CD4-positive, alpha-beta memory T cell (primary cell): ENCODE measurements at regions of chr11 and their contacts with region 1.

Region 1: GRCh38 chr11:85826116-85826855 is 15.3 kb upstream of the SYTL2 start:
- DNase-seq: peak in 2 of 5 donors; percentile 18 to 29
- H3K4me3 ChIP-seq: no peak overlapping the region
- H3K4me3 Mint-ChIP-seq: peak overlapping the region in 7 of 8 donors; percentile 4 to 76 (median 18)
- H3K27ac ChIP-seq: peak overlapping the region; percentile 6
- H3K27ac Mint-ChIP-seq: peak overlapping the region; percentile 82 to 99 (median 97)
- H3K4me1 ChIP-seq: peaks cover 74% of the 10 kb centered on the region
- H3K4me1 Mint-ChIP-seq: peaks cover 58 to 77% (median 63%) of the 10 kb centered on the region in 4 donors
- H3K27me3 ChIP-seq: no peaks in the 10 kb centered on the region
- H3K27me3 Mint-ChIP-seq: no peaks in the 10 kb centered on the region

Region 2: DNA sequence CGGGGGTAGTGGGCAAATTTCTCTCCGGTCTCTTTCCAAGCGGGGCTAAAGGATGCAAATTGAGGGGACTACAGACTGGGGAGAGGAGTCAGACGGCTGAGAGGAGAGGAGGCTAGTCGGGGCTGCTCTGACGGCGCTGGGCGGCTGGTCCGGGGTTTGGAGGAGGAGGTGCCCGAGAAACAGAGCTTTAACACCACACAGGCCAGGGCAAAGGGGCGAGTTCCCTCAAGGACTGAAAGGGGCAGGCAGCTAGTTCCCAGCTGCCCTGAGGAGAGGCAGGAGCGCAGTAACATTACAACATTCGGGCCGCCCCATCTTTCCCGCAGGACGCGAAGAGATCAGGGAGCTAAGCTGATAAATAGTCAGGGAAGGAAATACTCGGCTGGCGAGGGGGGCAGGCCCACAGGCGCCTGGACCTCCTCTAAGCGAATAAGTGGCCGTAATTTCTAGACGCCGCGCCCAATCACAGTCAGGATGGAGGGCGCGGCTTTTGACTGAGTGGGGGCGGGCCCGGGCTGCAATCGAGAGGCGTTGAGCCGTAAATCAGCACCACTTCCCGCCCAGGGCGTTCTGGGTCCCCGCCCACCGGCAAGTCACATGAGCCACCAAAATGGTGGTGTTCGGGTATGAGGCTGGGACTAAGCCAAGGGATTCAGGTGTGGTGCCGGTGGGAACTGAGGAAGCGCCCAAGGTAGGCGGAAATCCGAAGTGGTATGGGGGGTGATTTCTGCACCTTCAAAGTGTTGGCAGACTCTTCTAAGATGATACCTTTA is 198.1 kb before region 1 on chr11 and contains the start of gene TMEM126B:
- CTCF ChIA-PET with region 1: no interaction called
- POLR2A ChIA-PET with region 1: interaction called, 16 read pairs
- intact Hi-C with region 1: loop called (anchors 2 kb)
- DNase-seq: peak; percentile 92 to 97 (median 94)
- H3K4me3 ChIP-seq: peak within 1 kb of the TSS; percentile 58 to 73
- H3K4me3 Mint-ChIP-seq: peak within 1 kb of the TSS; percentile 93 to 99 (median 98)
- H3K27ac ChIP-seq: peak within 1 kb of the TSS; percentile 82
- H3K27ac Mint-ChIP-seq: peak within 1 kb of the TSS; percentile 91 to 99 (median 97)
- H3K4me1 ChIP-seq: peaks cover 30% of the 10 kb centered on the region
- H3K4me1 Mint-ChIP-seq: peaks cover 27 to 47% (median 36%) of the 10 kb centered on the region in 4 donors
- H3K27me3 ChIP-seq: no peaks in the 10 kb centered on the region
- H3K27me3 Mint-ChIP-seq: peaks cover 0 to 2% of the 10 kb centered on the region in 2 donors
- total RNA-seq, gene TMEM126B: 40.9 to 46.8 TPM

Region 3: DNA sequence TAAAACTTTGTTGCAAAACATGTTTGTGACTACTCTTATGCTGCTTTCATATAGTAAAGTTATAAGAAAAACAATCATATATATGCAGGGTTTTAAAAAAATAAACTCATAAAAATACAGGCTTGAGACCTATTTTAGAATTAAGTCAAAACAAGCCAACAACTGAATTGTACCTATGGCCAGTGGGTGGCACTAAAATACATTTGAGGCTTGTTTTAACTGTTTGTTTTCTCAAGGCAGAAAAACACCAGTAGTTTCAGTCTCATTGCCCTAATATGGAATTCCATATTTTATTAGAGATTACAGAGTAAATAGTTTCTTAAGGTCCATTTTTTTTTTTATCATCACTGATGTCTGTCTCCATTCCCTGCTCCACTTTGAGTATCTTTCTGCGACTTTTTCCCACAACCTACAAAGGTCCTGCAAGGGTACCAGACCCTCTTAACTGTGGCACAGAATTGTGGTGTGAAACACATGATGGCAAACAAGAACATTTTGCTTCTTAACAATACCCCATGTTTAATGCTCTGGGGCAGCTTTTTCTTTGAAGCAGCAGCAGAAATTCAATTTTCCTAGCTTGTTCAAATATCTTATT is 131.8 kb before region 1 on chr11:
- CTCF ChIA-PET with region 1: interaction called, 49 read pairs
- POLR2A ChIA-PET with region 1: interaction called, 5 read pairs
- intact Hi-C with region 1: loop called (anchors 1 kb)
- DNase-seq: peak in 4 of 5 donors; percentile 40 to 57 (median 45)
- H3K4me3 ChIP-seq: no peak overlapping the region
- H3K4me3 Mint-ChIP-seq: no peak overlapping the region
- H3K27ac ChIP-seq: no peak overlapping the region
- H3K27ac Mint-ChIP-seq: peak overlapping the region in 2 of 7 donors; percentile 7 to 53
- H3K4me1 ChIP-seq: peaks cover 5% of the 10 kb centered on the region
- H3K4me1 Mint-ChIP-seq: peaks cover 8 to 12% (median 9%) of the 10 kb centered on the region in 4 donors
- H3K27me3 ChIP-seq: no peaks in the 10 kb centered on the region
- H3K27me3 Mint-ChIP-seq: peaks cover 0 to 2% of the 10 kb centered on the region in 2 donors

Region 4: GRCh38 chr11:85699957-85700741 is 126.1 kb before region 1 on chr11:
- CTCF ChIA-PET with region 1: interaction called, 49 read pairs
- POLR2A ChIA-PET with region 1: interaction called, 5 read pairs
- intact Hi-C with region 1: no loop called
- DNase-seq: peak in 4 of 5 donors; percentile 32 to 53 (median 40)
- H3K4me3 ChIP-seq: peak overlapping the region in 1 of 2 donors; percentile 7
- H3K4me3 Mint-ChIP-seq: peak overlapping the region in 7 of 8 donors; percentile 32 to 72 (median 61)
- H3K27ac ChIP-seq: no peak overlapping the region
- H3K27ac Mint-ChIP-seq: peak overlapping the region; percentile 40 to 87 (median 68)
- H3K4me1 ChIP-seq: peaks cover 25% of the 10 kb centered on the region
- H3K4me1 Mint-ChIP-seq: peaks cover 21 to 32% (median 23%) of the 10 kb centered on the region in 4 donors
- H3K27me3 ChIP-seq: no peaks in the 10 kb centered on the region
- H3K27me3 Mint-ChIP-seq: no peaks in the 10 kb centered on the region

Region 5: DNA sequence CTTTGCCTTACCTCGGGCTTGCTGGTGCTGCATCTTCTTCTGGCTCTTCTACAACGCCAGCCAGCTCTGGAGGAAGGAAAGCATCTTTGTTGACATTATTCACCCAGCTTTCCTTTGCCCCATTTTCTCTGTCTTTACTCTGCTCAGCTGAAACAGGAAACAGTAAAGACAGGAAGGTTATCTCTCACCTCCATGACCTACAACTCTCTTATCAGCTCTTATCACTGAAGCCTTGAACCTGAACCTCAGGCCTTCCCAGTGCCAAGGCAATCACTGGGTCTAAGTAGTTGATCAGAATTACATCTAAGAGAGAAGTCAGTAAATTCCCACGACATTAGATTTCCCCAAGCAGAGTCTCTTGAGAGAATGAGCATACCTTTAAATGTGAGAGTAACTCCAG is 80.7 kb before region 1 on chr11:
- CTCF ChIA-PET with region 1: interaction called, 4 read pairs
- POLR2A ChIA-PET with region 1: interaction called, 16 read pairs
- intact Hi-C with region 1: no loop called
- DNase-seq: peak in 2 of 5 donors; percentile 16 to 29
- H3K4me3 ChIP-seq: no peak overlapping the region
- H3K4me3 Mint-ChIP-seq: peak overlapping the region in 7 of 8 donors; percentile 27 to 79 (median 60)
- H3K27ac ChIP-seq: no peak overlapping the region
- H3K27ac Mint-ChIP-seq: peak overlapping the region; percentile 71 to 93 (median 91)
- H3K4me1 ChIP-seq: peaks cover 68% of the 10 kb centered on the region
- H3K4me1 Mint-ChIP-seq: peaks cover 50 to 95% (median 69%) of the 10 kb centered on the region in 4 donors
- H3K27me3 ChIP-seq: no peaks in the 10 kb centered on the region
- H3K27me3 Mint-ChIP-seq: peaks cover 0 to 2% of the 10 kb centered on the region in 2 donors

Region 6: DNA sequence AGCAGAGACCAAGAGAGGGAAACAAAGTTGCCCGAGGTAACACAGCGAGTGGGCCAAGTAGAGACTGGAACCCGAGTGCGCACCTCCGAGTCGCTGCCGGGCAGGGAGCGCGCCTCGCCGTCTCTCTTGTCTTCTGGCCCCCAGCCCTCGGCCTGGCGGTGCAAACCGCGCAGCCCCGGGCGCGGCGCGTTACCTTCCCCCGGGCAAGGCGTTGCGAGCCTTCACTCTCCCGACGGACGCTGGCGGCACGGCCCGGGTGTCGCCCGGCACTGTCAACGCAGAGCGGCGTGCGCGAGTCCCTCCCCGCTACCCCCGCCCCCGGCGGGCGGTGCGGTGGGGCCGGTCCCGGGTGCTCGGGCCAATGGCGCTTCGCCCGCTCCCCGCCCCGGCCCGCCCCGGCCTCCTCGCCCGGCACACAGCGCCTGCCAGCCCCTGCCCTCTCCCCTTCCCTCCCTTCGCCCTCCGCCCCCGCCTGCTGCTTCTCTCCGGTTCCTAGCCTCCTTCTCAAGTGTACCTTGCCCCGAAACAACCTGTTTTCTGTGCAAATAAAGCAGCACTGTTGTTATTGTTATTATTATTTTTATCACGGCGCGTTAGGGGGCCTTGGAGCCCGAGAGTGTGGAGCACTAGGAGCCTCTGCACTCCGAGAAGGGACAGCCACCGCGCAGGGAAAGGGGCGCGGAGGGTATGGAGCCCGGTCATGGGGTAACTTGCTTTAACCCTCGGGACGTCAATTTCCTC is 15.2 kb before region 1 on chr11 and contains the start of gene SYTL2:
- CTCF ChIA-PET with region 1: interaction called, 33 read pairs
- POLR2A ChIA-PET with region 1: interaction called, 40 read pairs
- intact Hi-C with region 1: loop called (anchors 1 kb)
- DNase-seq: peak; percentile 74 to 83 (median 78)
- H3K4me3 ChIP-seq: peak within 1 kb of the TSS; percentile 58 to 85
- H3K4me3 Mint-ChIP-seq: peak within 1 kb of the TSS; percentile 89 to 97 (median 94)
- H3K27ac ChIP-seq: peak within 1 kb of the TSS; percentile 59
- H3K27ac Mint-ChIP-seq: peak within 1 kb of the TSS; percentile 90 to 96 (median 94)
- H3K4me1 ChIP-seq: peaks cover 38% of the 10 kb centered on the region
- H3K4me1 Mint-ChIP-seq: peaks cover 21 to 69% (median 45%) of the 10 kb centered on the region in 4 donors
- H3K27me3 ChIP-seq: no peaks in the 10 kb centered on the region
- H3K27me3 Mint-ChIP-seq: peaks cover 0 to 3% of the 10 kb centered on the region in 2 donors
- total RNA-seq, gene SYTL2: 35.5 to 35.7 TPM

Region 7: DNA sequence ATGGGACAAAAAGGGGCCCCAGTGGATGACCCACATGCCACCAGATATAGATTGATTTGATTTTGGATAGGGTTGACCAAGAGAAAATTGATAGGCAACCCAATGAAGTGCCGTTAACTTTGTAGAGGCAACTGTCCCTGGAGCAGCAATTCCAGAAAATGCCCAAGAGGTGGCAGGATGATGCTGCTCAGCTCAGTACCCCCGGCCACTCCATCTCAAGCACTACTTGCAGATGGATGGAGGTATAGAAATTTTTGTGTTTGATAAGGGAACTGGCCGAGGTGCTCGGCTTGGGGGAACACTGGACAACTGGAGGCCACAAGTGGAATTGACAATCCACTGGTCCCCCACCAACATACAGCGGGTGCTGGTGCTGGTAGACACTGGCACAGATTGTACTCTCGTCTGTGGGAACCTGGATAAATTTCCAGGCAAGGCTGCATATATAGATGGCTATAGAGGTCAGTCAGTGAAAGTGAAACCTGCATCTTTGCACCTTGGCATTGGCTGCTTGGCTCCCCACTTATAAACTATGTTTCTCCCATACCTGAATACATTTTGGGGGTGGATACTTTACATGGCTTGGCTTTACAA is 115.2 kb after region 1 on chr11:
- CTCF ChIA-PET with region 1: no interaction called
- POLR2A ChIA-PET with region 1: no interaction called
- intact Hi-C with region 1: no loop called
- DNase-seq: no peak
- H3K4me3 ChIP-seq: no peak overlapping the region
- H3K4me3 Mint-ChIP-seq: no peak overlapping the region
- H3K27ac ChIP-seq: no peak overlapping the region
- H3K27ac Mint-ChIP-seq: peak overlapping the region in 1 of 7 donors; percentile 75
- H3K4me1 ChIP-seq: no peaks in the 10 kb centered on the region
- H3K4me1 Mint-ChIP-seq: peaks cover 0 to 7% (median 3%) of the 10 kb centered on the region in 4 donors
- H3K27me3 ChIP-seq: no peaks in the 10 kb centered on the region
- H3K27me3 Mint-ChIP-seq: no peaks in the 10 kb centered on the region